ENCODE measurements at regions of chr5 and their contacts with region 1.

Region 1: GRCh38 chr5:39399135-39400036 is 25.4 kb downstream of the DAB2 start:
- DNase-seq: peak; percentile 98
- ATAC-seq: peak; percentile 95
- H3K4me3 ChIP-seq: no peak overlapping the region
- H3K27ac ChIP-seq: peak overlapping the region; percentile 61
- H3K4me1 ChIP-seq: peaks cover 37% of the 10 kb centered on the region
- H3K27me3 ChIP-seq: no peaks in the 10 kb centered on the region
- CTCF ChIP-seq: no peak

Region 2: DNA sequence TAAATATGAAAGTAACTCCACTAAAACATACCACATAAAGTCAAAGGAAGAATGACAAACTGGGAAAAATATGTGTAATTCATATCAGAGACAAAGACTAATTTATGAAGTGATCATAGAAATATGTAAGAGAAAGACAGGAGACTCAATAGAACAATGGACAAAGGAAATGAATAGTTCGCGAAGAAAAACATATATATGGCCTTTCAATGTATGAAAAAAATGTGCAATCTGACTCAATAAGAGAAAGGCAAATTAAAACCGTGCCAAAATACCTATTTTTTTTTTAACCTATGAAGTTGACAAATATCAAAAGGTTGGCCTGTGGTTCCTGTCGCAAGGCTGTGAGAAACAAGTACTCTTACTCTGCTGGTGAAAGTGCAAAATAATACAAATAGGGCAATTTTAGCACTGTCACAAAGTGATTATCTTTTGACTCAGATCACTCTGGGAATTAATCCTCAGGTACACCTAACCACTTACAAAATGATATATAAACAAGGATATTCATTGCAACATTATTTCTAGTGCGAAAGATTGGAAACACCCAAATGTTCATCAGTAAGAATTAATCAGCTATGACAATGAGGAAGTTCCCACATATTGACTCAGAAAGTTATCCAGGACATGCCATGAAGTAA is 38.8 kb before region 1 on chr5:
- CTCF ChIA-PET with region 1: no interaction called
- POLR2A ChIA-PET with region 1: no interaction called
- intact Hi-C with region 1: no loop called
- DNase-seq: peak; percentile 25
- ATAC-seq: no peak
- H3K4me3 ChIP-seq: no peak overlapping the region
- H3K27ac ChIP-seq: no peak overlapping the region
- H3K4me1 ChIP-seq: peaks cover 4% of the 10 kb centered on the region; the same call in 1 of the 2 replicates
- H3K27me3 ChIP-seq: no peaks in the 10 kb centered on the region
- CTCF ChIP-seq: no peak

Region 3: DNA sequence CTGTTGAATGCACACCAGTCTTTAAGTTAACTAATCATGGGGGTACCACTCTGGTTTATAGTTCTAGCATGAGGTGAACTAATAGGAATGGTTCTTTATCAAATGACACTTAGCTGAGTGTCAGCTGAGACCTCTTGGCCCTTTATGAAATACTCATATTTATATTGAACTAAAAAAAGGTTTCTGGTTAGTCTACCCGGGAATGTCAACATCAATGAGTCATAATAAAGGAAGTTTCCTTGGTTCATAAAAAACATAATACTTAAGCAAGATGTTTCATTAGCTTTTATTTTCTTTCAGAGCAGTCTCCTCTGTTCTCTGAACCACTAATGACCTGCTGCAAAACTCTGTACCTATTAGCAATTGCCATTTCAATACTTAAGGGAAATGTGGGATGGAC is 11.7 kb after region 1 on chr5:
- CTCF ChIA-PET with region 1: no interaction called
- POLR2A ChIA-PET with region 1: no interaction called
- intact Hi-C with region 1: loop called (anchors 1 kb)
- DNase-seq: peak; percentile 85
- ATAC-seq: peak; percentile 91
- H3K4me3 ChIP-seq: 0 out of 2 replicates have a peak overlapping the region, but pooled peaks have one; percentile 14
- H3K27ac ChIP-seq: peak overlapping the region; percentile 61
- H3K4me1 ChIP-seq: peaks cover 28% of the 10 kb centered on the region
- H3K27me3 ChIP-seq: no peaks in the 10 kb centered on the region
- CTCF ChIP-seq: no peak

Region 4: DNA sequence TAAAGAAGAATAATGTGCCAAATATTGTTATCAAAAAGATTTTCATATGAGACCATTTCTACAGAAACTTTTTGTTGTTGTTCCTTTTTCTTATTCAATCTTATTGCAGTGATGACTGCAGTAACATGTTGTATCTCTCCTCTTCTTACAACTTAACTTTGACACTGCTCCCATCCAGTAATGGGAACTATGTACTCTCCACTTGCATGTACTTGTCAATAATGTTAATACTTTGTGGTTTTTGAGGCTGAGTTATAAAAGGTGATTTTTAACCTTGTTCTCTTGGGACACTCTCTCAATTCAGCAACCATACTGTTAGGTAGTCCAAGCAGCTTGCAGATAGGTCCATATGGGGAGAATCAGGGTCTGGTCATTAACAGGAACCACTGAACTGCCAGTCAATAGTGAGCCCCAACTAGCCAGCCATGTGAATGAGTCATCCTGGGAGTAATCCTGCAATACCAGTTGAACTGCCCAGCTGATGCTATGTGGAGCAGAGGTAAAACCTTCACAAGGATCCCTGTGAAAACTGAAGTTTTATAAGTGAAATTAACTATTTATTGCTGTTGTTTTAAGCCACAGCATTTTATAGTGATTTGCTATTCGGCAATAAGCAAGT is 225.0 kb after region 1 on chr5:
- CTCF ChIA-PET with region 1: no interaction called
- POLR2A ChIA-PET with region 1: no interaction called
- intact Hi-C with region 1: no loop called
- DNase-seq: peak; percentile 97
- ATAC-seq: peak; percentile 98
- H3K4me3 ChIP-seq: peak overlapping the region; percentile 54
- H3K27ac ChIP-seq: peak overlapping the region; percentile 87
- H3K4me1 ChIP-seq: peaks cover 27% of the 10 kb centered on the region
- H3K27me3 ChIP-seq: no peaks in the 10 kb centered on the region
- CTCF ChIP-seq: no peak